ENCODE measurements at regions of chr11 and their contacts with region 1.

Region 1: GRCh38 chr11:26227296-26227695 is 104.6 kb upstream of the ANO3 start:
- DNase-seq: peak; percentile 71
- H3K4me3 ChIP-seq: peak overlapping the region; percentile 29
- H3K27ac ChIP-seq: peak overlapping the region; percentile 59
- H3K27me3 ChIP-seq: no peaks in the 10 kb centered on the region
- CTCF ChIP-seq: peak; percentile 58

Region 2: DNA sequence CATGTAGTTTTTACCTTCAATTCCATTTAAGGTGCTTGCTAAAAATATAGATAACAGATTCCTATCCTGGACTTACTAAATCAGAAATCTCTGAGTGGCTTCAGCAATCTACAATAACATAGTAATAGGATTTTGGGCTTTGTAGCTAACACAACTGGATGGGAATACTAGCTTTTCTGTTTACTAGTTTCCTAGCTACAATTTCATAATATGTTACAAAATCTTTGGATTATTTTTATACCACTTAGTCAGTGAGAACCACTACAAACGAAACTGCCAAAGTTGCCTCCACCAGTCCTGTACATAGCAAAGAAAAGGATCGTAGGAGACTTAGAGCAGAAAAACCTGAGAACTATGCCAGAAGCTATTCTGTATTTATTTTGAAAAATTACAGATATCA is 16.9 kb after region 1 on chr11:
- CTCF ChIA-PET with region 1: interaction called, 11 read pairs
- POLR2A ChIA-PET with region 1: interaction called, 4 read pairs
- DNase-seq: no peak
- H3K4me3 ChIP-seq: no peak overlapping the region
- H3K27ac ChIP-seq: no peak overlapping the region
- H3K27me3 ChIP-seq: no peaks in the 10 kb centered on the region
- CTCF ChIP-seq: no peak

Region 3: GRCh38 chr11:26276798-26277424 is 49.6 kb after region 1 on chr11:
- CTCF ChIA-PET with region 1: interaction called, 12 read pairs
- POLR2A ChIA-PET with region 1: no interaction called
- DNase-seq: peak; percentile 20
- H3K4me3 ChIP-seq: no peak overlapping the region
- H3K27ac ChIP-seq: no peak overlapping the region
- H3K27me3 ChIP-seq: no peaks in the 10 kb centered on the region
- CTCF ChIP-seq: peak; percentile 99

Region 4: DNA sequence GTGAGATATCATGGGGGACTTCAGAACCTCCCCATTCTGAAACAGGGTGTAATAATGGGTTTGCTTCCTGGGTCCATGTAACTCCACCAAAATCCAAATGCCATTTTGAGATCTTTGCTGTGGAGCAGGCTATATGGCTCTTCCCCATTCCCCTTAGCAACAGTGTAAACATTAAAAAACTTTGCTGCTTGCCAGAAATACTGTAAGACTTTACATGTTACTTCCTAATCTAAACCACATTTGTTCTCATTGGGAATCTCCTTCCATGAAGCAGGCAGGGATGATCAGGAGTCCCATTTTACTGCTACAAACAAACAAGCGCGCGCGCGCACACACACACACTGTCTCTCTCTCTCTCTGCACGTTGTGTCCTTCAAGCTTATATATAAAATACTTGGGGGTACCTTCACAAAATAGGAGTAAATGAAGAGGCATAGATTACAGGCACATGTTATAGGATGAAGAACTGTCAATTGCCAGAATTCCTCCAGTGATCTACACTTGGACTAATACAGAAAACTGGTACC is 191.2 kb after region 1 on chr11:
- CTCF ChIA-PET with region 1: no interaction called
- POLR2A ChIA-PET with region 1: no interaction called
- DNase-seq: no peak
- H3K4me3 ChIP-seq: no peak overlapping the region
- H3K27ac ChIP-seq: no peak overlapping the region
- H3K27me3 ChIP-seq: no peaks in the 10 kb centered on the region
- CTCF ChIP-seq: no peak

Region 5: GRCh38 chr11:26527685-26528084 is 300.4 kb after region 1 on chr11:
- CTCF ChIA-PET with region 1: no interaction called
- POLR2A ChIA-PET with region 1: no interaction called
- DNase-seq: no peak
- H3K4me3 ChIP-seq: no peak overlapping the region
- H3K27ac ChIP-seq: no peak overlapping the region
- H3K27me3 ChIP-seq: no peaks in the 10 kb centered on the region
- CTCF ChIP-seq: no peak

Measured in AG04450 (cell line).